Activated CD8-positive, alpha-beta T cell treated with anti-CD3 and anti-CD28 coated beads, Interleukin-2, amount 10 ng/mL, durations not matched to agents 7 days and 5 days (primary cell): ENCODE measurements at regions of chr7 and their contacts with region 1.

Region 1: DNA sequence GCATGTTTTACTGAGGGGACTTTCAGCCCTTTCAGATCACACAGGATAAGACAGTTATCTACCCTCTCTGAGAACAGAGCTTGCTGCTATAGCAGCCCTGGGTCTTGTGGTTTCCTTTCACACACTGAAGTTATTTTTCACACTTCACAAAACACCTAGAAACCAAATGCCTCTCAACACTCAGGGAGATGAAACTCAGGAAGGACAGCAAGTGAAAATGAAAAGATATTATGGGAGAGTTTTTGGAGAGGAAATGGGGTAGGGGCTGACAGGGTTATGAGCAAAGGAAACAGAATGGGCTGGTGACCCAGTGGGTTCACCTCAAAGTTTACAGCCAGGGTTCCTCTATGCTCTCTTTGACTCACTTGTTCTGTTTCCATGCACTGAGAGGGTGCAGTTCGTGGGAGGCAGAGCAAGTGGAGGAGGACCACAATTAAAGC is 17.0 kb upstream of the GIMAP2 start:
- DNase-seq: peak; percentile 80
- ATAC-seq: peak; percentile 81
- H3K4me3 Mint-ChIP-seq: peak overlapping the region; percentile 32
- H3K27ac Mint-ChIP-seq: peak overlapping the region; percentile 87
- H3K4me1 Mint-ChIP-seq: peaks cover 90% of the 10 kb centered on the region
- H3K27me3 Mint-ChIP-seq: no peaks in the 10 kb centered on the region

Region 2: GRCh38 chr7:150390205-150390604 is 278.3 kb before region 1 on chr7:
- CTCF ChIA-PET with region 1: no interaction called
- POLR2A ChIA-PET with region 1: no interaction called
- DNase-seq: no peak
- ATAC-seq: no peak
- H3K4me3 Mint-ChIP-seq: no peak overlapping the region
- H3K27ac Mint-ChIP-seq: no peak overlapping the region
- H3K4me1 Mint-ChIP-seq: peaks cover 7% of the 10 kb centered on the region
- H3K27me3 Mint-ChIP-seq: no peaks in the 10 kb centered on the region

Region 3: GRCh38 chr7:150620617-150621371 is 47.7 kb before region 1 on chr7:
- CTCF ChIA-PET with region 1: no interaction called
- POLR2A ChIA-PET with region 1: no interaction called
- DNase-seq: no peak
- ATAC-seq: no peak
- H3K4me3 Mint-ChIP-seq: no peak overlapping the region
- H3K27ac Mint-ChIP-seq: peak overlapping the region; percentile 37
- H3K4me1 Mint-ChIP-seq: peaks cover 56% of the 10 kb centered on the region
- H3K27me3 Mint-ChIP-seq: no peaks in the 10 kb centered on the region

Region 4: GRCh38 chr7:150631866-150632864 is 36.3 kb before region 1 on chr7 and contains the start of gene GIMAP6:
- CTCF ChIA-PET with region 1: interaction called, 6 read pairs
- POLR2A ChIA-PET with region 1: interaction called, 20 read pairs
- DNase-seq: peak; percentile 59
- ATAC-seq: peak; percentile 68
- H3K4me3 Mint-ChIP-seq: peak within 1 kb of the TSS; percentile 89
- H3K27ac Mint-ChIP-seq: peak within 1 kb of the TSS; percentile 90
- H3K4me1 Mint-ChIP-seq: peaks cover 60% of the 10 kb centered on the region
- H3K27me3 Mint-ChIP-seq: no peaks in the 10 kb centered on the region
- total RNA-seq, gene GIMAP6: 88.9 to 93.3 TPM

Region 5: DNA sequence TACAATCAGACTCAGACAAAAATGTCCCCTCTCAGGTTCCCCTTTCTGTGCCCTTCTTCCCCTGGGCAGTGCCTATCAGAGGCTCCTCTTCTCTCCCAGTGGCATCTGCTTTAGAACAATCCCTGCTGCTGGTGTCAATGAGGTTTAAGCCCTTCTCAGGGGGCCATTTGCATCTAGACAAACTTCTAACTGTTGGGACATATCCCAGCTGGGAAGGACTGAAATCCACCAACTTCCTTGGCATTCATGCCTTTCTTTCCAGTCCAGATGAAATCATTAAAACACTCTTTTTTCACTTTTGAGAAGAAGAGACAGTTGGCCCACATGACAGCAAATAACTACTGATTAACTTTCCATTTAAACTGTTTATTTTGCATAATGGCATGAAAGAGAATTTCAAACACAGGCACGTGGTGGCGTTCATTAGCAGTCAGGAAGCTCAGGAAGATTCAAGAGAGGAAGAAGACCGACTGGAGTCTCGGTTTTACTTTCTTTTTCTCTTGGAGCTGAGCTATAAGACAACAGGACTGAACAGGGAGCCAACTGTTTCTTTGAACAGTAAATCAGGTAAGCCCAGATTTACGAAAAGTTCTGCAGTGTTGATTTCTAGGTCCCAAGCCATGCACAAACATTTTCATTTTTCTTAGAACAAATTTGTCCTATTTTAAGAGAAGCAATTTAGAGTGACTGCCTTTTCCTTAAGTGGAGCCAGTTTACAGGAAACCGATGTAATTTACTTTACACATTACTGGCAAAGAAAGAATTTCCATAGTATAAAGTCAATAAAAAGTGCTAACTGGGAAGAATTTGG is 16.9 kb after region 1 on chr7 and contains the start of gene GIMAP2:
- CTCF ChIA-PET with region 1: interaction called, 8 read pairs
- POLR2A ChIA-PET with region 1: interaction called, 12 read pairs
- DNase-seq: peak; percentile 50
- ATAC-seq: peak; percentile 89
- H3K4me3 Mint-ChIP-seq: peak within 1 kb of the TSS; percentile 95
- H3K27ac Mint-ChIP-seq: peak within 1 kb of the TSS; percentile 97
- H3K4me1 Mint-ChIP-seq: peaks cover 76% of the 10 kb centered on the region
- H3K27me3 Mint-ChIP-seq: no peaks in the 10 kb centered on the region
- total RNA-seq, gene GIMAP2: 79.0 to 82.9 TPM

Region 6: GRCh38 chr7:151051108-151051507 is 382.6 kb after region 1 on chr7:
- CTCF ChIA-PET with region 1: no interaction called
- POLR2A ChIA-PET with region 1: no interaction called
- DNase-seq: peak; percentile 76
- ATAC-seq: peak; percentile 75
- H3K4me3 Mint-ChIP-seq: no peak overlapping the region
- H3K27ac Mint-ChIP-seq: no peak overlapping the region
- H3K4me1 Mint-ChIP-seq: peaks cover 23% of the 10 kb centered on the region
- H3K27me3 Mint-ChIP-seq: peaks cover 12% of the 10 kb centered on the region